ENCODE measurements at regions of chr6 and their contacts with region 1.

Region 1: GRCh38 chr6:149565527-149566409 is at the start of gene GINM1:
- DNase-seq: peak; percentile 93 to 96
- H3K4me3 ChIP-seq: peak within 1 kb of the TSS; percentile 91 to 99 (median 92)
- H3K27ac ChIP-seq: peak within 1 kb of the TSS; percentile 88 to 96 (median 89)
- H3K4me1 ChIP-seq: peaks cover 7 to 14% of the 10 kb centered on the region in 2 donors
- H3K27me3 ChIP-seq: no peaks in the 10 kb centered on the region
- CTCF ChIP-seq: peak; percentile 24 to 80 (median 72)
- POLR2A ChIP-seq: no peak
- total RNA-seq, gene GINM1: 77.3 to 101 (median 86.8) TPM

Region 2: GRCh38 chr6:149729824-149730223 is 164.1 kb after region 1 on chr6:
- intact Hi-C with region 1: loop called (anchors 10 kb)
- DNase-seq: no peak
- H3K4me3 ChIP-seq: no peak overlapping the region
- H3K27ac ChIP-seq: no peak overlapping the region
- H3K4me1 ChIP-seq: peaks cover 0 to 4% of the 10 kb centered on the region in 2 donors
- H3K27me3 ChIP-seq: no peaks in the 10 kb centered on the region
- CTCF ChIP-seq: no peak
- POLR2A ChIP-seq: no peak

Region 3: DNA sequence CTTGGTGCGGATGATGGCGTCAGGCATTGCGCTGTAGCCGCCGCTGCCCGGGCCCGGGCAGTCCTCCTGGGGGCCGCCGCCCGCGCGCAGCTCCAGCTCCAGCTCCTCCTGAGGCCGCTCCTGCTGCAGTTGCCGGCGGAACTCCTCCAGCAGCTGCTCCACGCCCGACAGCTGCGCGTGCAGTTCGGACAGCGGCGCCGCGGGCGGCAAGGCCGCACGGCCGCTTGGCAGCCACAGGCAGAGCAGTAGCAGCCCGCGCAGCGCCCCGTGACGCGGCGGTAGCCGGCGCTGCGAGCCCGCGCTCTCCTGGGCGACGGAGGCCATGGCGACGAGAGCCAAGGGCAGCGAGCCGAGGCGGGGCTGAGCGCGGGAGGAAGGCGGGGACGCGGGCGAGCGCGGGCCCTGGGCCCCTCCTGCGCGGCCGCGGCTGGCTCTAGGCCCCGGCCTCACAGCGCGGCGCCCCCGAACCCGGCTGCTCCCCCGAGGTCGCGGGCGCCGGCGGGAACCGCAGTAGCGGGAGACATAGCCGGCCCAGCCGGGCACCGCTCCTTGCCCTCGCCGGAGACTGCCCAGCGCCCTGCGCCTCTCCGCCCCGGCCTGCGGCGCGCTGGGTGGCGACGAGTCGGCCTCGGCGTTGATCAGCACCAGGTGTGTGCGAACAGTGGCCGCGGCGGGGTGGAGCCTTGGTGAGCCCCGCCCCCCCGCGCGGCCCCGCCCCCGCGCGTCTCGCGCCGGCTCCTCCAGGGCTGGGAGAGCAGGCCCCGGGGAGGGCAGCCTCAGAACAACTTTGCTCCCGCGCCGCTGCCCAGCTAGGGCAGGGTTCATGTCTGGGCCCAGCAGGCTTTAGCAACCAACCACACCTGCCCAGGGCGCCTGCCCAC is 298.2 kb after region 1 on chr6 and contains the start of gene LRP11:
- intact Hi-C with region 1: loop called (anchors 10 kb)
- DNase-seq: peak; percentile 91 to 93
- H3K4me3 ChIP-seq: peak within 1 kb of the TSS; percentile 3 to 84 (median 73)
- H3K27ac ChIP-seq: peak within 1 kb of the TSS; percentile 82 to 98 (median 91)
- H3K4me1 ChIP-seq: peaks cover 26 to 31% of the 10 kb centered on the region in 2 donors
- H3K27me3 ChIP-seq: no peaks in the 10 kb centered on the region
- CTCF ChIP-seq: peak in 1 of 6 experiments; percentile 2
- POLR2A ChIP-seq: peak; percentile 71 to 96
- total RNA-seq, gene LRP11: 39.4 to 76.8 (median 57.2) TPM